Endothelial cell of umbilical vein (primary cell): ENCODE measurements at regions of chr10 and their contacts with region 1.

Region 1: GRCh38 chr10:133309111-133309719 is 501 bp downstream of the ZNF511 start:
- DNase-seq: peak; percentile 92
- H3K4me3 ChIP-seq: peak overlapping the region; percentile 55 to 78 (median 75)
- H3K27ac ChIP-seq: peak overlapping the region; percentile 87
- H3K4me1 ChIP-seq: peaks cover 7% of the 10 kb centered on the region
- H3K27me3 ChIP-seq: no peaks in the 10 kb centered on the region
- CTCF ChIP-seq: no peak
- POLR2A ChIP-seq: no peak

Region 2: DNA sequence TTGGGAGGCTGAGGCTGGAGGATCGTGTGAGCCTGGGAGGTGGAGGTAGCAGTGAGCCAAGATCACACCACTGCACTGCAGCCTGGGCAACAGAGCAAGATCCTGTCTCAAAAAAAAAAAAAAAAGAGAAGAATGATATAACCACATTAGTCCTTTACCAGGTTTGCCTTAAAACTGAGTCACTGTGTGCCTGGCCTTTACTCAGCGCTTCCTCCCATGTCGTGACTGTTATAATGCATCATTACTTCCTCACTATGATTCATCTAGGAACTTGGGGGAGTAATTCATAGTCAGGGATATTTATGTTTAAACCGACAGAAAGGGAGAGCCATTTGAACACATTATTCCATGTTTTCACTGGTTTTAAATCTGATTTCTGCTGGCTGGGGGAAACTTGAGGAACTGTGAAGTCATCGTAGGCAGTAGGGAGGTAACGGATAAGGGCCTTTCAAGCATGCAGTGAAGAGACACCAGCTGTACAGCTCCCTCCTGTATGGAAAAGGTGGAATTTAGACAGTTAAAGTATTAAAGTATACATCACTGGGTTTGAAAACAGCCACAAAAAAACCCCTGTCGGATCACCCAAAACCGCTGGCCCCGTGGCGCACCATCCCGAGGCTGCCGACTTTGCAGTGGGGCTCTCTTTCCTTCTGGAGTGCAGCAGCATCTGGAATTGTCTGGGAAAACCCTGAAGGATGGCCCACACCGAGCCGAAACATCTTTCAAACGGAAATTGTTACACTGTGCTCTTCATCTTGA is 643.1 kb before region 1 on chr10:
- CTCF ChIA-PET with region 1: interaction called, 4 read pairs
- POLR2A ChIA-PET with region 1: no interaction called
- dilution Hi-C with region 1: no loop called
- intact Hi-C with region 1: loop called (anchors 10 kb)
- DNase-seq: peak; percentile 96
- H3K4me3 ChIP-seq: peak overlapping the region in 2 of 3 experiments; percentile 34 to 44
- H3K27ac ChIP-seq: peak overlapping the region; percentile 87
- H3K4me1 ChIP-seq: peaks cover 30% of the 10 kb centered on the region
- H3K27me3 ChIP-seq: no peaks in the 10 kb centered on the region
- CTCF ChIP-seq: no peak
- POLR2A ChIP-seq: no peak

Region 3: GRCh38 chr10:133186416-133187090 is 122.7 kb before region 1 on chr10:
- CTCF ChIA-PET with region 1: no interaction called
- POLR2A ChIA-PET with region 1: no interaction called
- dilution Hi-C with region 1: no loop called
- intact Hi-C with region 1: no loop called
- DNase-seq: no peak
- H3K4me3 ChIP-seq: no peak overlapping the region
- H3K27ac ChIP-seq: no peak overlapping the region
- H3K4me1 ChIP-seq: no peaks in the 10 kb centered on the region
- H3K27me3 ChIP-seq: no peaks in the 10 kb centered on the region
- CTCF ChIP-seq: no peak
- POLR2A ChIP-seq: no peak

Region 4: DNA sequence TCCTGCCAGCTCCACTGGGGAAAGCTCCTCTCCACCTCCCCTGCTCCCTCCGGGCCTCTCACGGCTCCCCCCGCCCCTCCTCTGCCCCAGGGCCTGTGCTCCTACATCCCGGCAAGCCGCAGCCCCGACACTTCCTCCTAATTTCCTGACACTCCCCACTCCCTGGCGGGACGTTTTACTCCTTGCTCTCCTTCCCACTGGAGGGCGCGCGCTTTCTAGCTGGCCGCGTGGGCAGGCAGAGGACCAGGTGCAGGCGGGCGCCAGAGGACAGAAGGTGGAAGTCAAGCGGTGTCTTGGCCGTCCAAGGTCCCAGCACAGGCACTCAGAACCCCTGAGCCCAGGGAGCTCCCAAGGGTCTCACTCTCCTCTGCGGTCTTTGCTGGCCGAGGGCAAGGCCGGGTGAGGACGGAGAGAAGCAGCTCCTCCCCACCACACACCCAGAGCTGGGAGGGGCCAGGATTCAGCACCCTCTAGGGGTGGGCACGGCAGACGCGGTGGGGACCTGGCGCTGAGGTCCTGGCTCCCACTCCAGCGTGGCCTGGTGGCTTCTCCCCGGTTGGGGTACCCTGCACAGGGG is 51.6 kb before region 1 on chr10:
- CTCF ChIA-PET with region 1: interaction called, 8 read pairs
- POLR2A ChIA-PET with region 1: no interaction called
- dilution Hi-C with region 1: no loop called
- intact Hi-C with region 1: loop called (anchors 1 kb)
- DNase-seq: peak; percentile 29
- H3K4me3 ChIP-seq: no peak overlapping the region
- H3K27ac ChIP-seq: no peak overlapping the region
- H3K4me1 ChIP-seq: peaks cover 26% of the 10 kb centered on the region
- H3K27me3 ChIP-seq: no peaks in the 10 kb centered on the region
- CTCF ChIP-seq: peak; percentile 24 to 33
- POLR2A ChIP-seq: no peak

Region 5: GRCh38 chr10:133324198-133324792 is 15.1 kb after region 1 on chr10:
- CTCF ChIA-PET with region 1: interaction called, 13 read pairs
- POLR2A ChIA-PET with region 1: no interaction called
- dilution Hi-C with region 1: no loop called
- intact Hi-C with region 1: loop called (anchors 1 kb)
- DNase-seq: peak; percentile 22
- H3K4me3 ChIP-seq: no peak overlapping the region
- H3K27ac ChIP-seq: no peak overlapping the region
- H3K4me1 ChIP-seq: no peaks in the 10 kb centered on the region
- H3K27me3 ChIP-seq: peaks cover 32 to 35% of the 10 kb centered on the region in 2 experiments
- CTCF ChIP-seq: no peak
- POLR2A ChIP-seq: no peak

Region 6: GRCh38 chr10:133357285-133358151 is 48.3 kb after region 1 on chr10 and contains the start of gene FUOM:
- CTCF ChIA-PET with region 1: no interaction called
- POLR2A ChIA-PET with region 1: no interaction called
- dilution Hi-C with region 1: no loop called
- intact Hi-C with region 1: no loop called
- DNase-seq: peak; percentile 52
- H3K4me3 ChIP-seq: peak within 1 kb of the TSS; percentile 27 to 63 (median 52)
- H3K27ac ChIP-seq: no peak within 1 kb of the TSS
- H3K4me1 ChIP-seq: peaks cover 3% of the 10 kb centered on the region
- H3K27me3 ChIP-seq: no peaks in the 10 kb centered on the region
- CTCF ChIP-seq: no peak
- POLR2A ChIP-seq: no peak
- total RNA-seq, gene FUOM: 16.2 and 17.4 TPM in 2 replicates

Region 7: GRCh38 chr10:133373104-133373624 is 63.9 kb after region 1 on chr10 and contains the start of gene ECHS1:
- CTCF ChIA-PET with region 1: no interaction called
- POLR2A ChIA-PET with region 1: no interaction called
- dilution Hi-C with region 1: no loop called
- intact Hi-C with region 1: loop called (anchors 5 kb)
- DNase-seq: peak; percentile 93
- H3K4me3 ChIP-seq: peak within 1 kb of the TSS; percentile 53 to 100 (median 69)
- H3K27ac ChIP-seq: peak within 1 kb of the TSS; percentile 74
- H3K4me1 ChIP-seq: peaks cover 9% of the 10 kb centered on the region
- H3K27me3 ChIP-seq: no peaks in the 10 kb centered on the region
- CTCF ChIP-seq: no peak
- POLR2A ChIP-seq: peak; percentile 91
- total RNA-seq, gene ECHS1: 91.9 and 108 TPM in 2 replicates

Region 8: GRCh38 chr10:133394064-133394663 is 84.9 kb after region 1 on chr10 and contains the start of gene MTG1:
- CTCF ChIA-PET with region 1: no interaction called
- POLR2A ChIA-PET with region 1: no interaction called
- dilution Hi-C with region 1: no loop called
- intact Hi-C with region 1: loop called (anchors 5 kb)
- DNase-seq: peak; percentile 90
- H3K4me3 ChIP-seq: peak within 1 kb of the TSS; percentile 46 to 83 (median 69)
- H3K27ac ChIP-seq: peak within 1 kb of the TSS; percentile 12
- H3K4me1 ChIP-seq: peaks cover 9% of the 10 kb centered on the region
- H3K27me3 ChIP-seq: no peaks in the 10 kb centered on the region
- CTCF ChIP-seq: peak in 1 of 2 donors; percentile 9
- POLR2A ChIP-seq: peak; percentile 84
- total RNA-seq, gene MTG1: 60.2 and 66.5 TPM in 2 replicates